MCF 10A (cell line): ENCODE measurements at regions of chr16 and their contacts with region 1.

Region 1: DNA sequence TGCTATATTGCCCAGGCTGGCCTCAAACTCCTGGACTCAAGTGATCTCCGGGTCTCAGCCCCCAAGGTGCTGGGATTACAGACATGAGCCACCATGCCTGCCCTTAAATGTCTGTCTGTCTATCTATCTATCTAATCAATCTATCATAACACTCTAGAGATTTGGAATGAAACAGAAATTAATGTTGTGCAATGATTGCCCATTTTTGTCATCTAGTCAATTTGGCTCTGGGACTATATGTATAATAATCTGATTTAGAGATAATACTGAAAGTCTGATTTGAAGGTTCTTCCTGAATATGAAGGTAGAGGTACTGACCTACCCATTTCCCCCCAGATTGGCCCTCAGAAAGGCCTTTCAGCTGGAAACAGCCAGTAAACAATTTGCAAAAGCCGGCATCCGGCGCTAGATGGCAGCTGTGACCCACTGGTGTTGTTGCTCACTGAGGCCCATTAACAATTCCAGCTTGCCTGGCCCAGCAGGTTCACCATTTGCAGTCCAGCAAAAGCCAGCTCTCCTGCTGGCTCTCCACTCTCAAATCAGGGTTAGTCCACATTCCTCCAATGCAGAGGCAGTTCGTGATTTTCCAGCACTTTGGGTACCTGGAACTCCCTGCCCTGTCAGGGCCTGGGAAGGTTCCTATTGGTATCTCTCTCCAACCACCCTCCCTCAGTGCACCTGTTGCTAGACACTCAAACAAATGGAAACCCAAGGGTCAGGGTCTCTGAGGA is 22.9 kb upstream of the C16orf87 start:
- DNase-seq: peak; percentile 79
- H3K4me3 Mint-ChIP-seq: no peak overlapping the region
- H3K27ac Mint-ChIP-seq: no peak overlapping the region
- H3K4me1 Mint-ChIP-seq: no peaks in the 10 kb centered on the region
- H3K27me3 Mint-ChIP-seq: no peaks in the 10 kb centered on the region
- CTCF ChIP-seq: peak; percentile 95

Region 2: GRCh38 chr16:46607529-46607928 is 246.3 kb before region 1 on chr16:
- CTCF ChIA-PET with region 1: no interaction called
- POLR2A ChIA-PET with region 1: no interaction called
- intact Hi-C with region 1: no loop called
- DNase-seq: peak; percentile 49
- H3K4me3 Mint-ChIP-seq: no peak overlapping the region
- H3K27ac Mint-ChIP-seq: no peak overlapping the region
- H3K4me1 Mint-ChIP-seq: no peaks in the 10 kb centered on the region
- H3K27me3 Mint-ChIP-seq: no peaks in the 10 kb centered on the region
- CTCF ChIP-seq: peak; percentile 26

Region 3: DNA sequence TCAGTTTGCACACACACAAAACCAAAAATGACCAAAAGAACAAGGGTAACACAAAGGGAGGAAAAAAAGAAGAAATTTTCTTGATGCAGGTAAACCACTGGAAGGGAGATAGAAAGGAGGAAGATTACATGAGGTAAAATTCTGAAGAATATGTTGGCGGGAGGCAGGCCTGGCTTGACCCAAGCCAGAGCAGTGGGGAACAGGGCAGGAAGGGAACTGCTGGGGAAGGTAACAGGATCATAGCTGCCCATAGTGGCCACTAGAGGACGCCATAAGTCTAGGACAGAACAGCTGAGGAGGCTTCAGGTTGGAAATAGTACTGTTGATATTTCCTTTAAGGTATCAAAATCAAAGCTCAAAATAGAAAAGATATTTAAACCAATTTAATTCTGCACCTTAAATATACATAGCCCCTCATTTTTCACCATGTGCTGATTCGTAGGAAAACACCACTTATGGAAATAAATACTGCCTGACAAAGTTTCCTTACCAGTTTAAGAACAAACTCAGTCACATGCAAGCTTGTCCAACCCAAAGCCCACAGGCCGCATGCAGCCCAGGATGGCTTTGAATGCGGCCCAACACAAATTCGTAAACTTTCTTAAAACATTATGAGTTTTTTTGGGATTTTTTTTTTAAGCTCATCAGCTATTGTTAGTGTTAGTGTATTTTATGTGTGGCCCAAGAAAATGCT is 180.4 kb before region 1 on chr16:
- CTCF ChIA-PET with region 1: interaction called, 10 read pairs
- POLR2A ChIA-PET with region 1: no interaction called
- intact Hi-C with region 1: no loop called
- DNase-seq: peak; percentile 69
- H3K4me3 Mint-ChIP-seq: no peak overlapping the region
- H3K27ac Mint-ChIP-seq: no peak overlapping the region
- H3K4me1 Mint-ChIP-seq: no peaks in the 10 kb centered on the region
- H3K27me3 Mint-ChIP-seq: no peaks in the 10 kb centered on the region
- CTCF ChIP-seq: peak; percentile 89

Region 4: DNA sequence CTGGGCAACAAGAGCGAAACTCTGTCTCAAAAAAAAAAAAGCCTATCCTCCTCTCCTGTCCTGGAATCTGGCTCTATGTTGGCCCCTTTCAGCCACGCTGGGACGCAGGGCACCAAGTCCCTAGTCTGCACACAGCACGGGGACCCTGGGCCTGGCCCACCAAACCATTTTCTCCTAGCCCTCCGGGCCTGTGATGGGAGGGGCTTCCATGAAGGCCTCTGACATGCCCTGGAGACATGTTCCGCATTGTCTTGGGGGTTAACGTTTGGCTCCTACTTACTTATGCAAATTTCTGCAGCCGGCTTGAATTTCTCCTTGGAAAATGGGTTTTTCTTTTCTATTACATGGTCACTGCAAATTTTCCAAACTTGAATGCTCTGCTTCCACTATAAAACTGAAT is 17.7 kb after region 1 on chr16:
- CTCF ChIA-PET with region 1: interaction called, 50 read pairs
- POLR2A ChIA-PET with region 1: no interaction called
- intact Hi-C with region 1: no loop called
- DNase-seq: no peak
- H3K4me3 Mint-ChIP-seq: no peak overlapping the region
- H3K27ac Mint-ChIP-seq: no peak overlapping the region
- H3K4me1 Mint-ChIP-seq: no peaks in the 10 kb centered on the region
- H3K27me3 Mint-ChIP-seq: no peaks in the 10 kb centered on the region
- CTCF ChIP-seq: no peak

Region 5: GRCh38 chr16:46896314-46896968 is 42.6 kb after region 1 on chr16:
- CTCF ChIA-PET with region 1: interaction called, 287 read pairs
- POLR2A ChIA-PET with region 1: no interaction called
- intact Hi-C with region 1: no loop called
- DNase-seq: no peak
- H3K4me3 Mint-ChIP-seq: no peak overlapping the region
- H3K27ac Mint-ChIP-seq: no peak overlapping the region
- H3K4me1 Mint-ChIP-seq: peaks cover 6% of the 10 kb centered on the region
- H3K27me3 Mint-ChIP-seq: no peaks in the 10 kb centered on the region
- CTCF ChIP-seq: no peak

Region 6: GRCh38 chr16:46918861-46919792 is 65.2 kb after region 1 on chr16:
- CTCF ChIA-PET with region 1: interaction called, 287 read pairs
- POLR2A ChIA-PET with region 1: no interaction called
- intact Hi-C with region 1: no loop called
- DNase-seq: no peak
- H3K4me3 Mint-ChIP-seq: no peak overlapping the region
- H3K27ac Mint-ChIP-seq: peak overlapping the region; percentile 8
- H3K4me1 Mint-ChIP-seq: no peaks in the 10 kb centered on the region
- H3K27me3 Mint-ChIP-seq: no peaks in the 10 kb centered on the region
- CTCF ChIP-seq: no peak

Region 7: DNA sequence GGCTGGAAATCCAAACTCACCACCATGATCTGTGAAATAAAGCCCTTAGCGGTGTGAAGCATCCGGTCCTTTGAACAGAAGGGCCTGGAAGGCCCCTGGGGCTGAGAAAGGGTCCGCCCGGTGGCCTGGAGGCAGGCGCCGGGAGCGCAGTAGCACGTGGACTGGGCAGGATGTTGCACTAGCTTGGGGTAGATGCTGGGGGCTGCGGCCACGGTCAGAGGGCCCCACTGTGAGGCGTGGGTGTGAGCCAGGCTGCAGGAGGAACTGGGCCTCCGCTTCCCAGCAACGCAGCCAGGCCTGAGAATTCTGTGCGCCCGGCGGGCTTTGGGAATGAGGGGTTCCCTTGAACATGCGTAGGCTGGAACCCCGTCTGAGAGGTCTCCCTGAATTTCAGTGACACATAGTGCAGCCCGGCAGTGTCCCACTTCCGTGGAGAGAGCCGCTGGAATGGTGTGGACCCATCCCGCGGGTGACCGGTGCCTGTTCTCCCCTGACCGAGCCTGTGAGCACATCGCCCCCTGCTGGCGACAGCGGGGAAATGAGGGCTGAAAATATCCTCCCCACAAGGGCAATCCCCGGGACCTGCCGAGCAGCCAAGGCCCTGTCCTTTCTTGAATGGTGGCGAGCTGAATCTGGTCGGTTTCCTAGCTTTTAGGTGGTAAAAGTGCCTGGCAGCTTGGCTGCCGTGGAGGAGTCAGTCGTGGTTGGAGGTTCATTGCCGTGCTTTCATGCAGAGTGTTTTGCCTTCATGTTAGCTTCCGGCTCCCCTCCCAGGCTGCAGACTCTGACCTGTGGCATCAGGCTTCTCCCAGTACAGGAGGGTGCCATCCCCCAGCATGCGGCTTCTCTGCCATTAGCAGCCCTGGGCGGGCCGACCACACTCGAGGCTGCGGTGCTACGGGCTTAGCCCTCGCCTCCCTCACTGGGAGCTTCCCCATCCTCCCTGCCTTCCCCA is 75.8 kb after region 1 on chr16:
- CTCF ChIA-PET with region 1: interaction called, 87 read pairs
- POLR2A ChIA-PET with region 1: interaction called, 4 read pairs
- intact Hi-C with region 1: loop called (anchors 1 kb)
- DNase-seq: peak; percentile 57
- H3K4me3 Mint-ChIP-seq: no peak overlapping the region
- H3K27ac Mint-ChIP-seq: no peak overlapping the region
- H3K4me1 Mint-ChIP-seq: no peaks in the 10 kb centered on the region
- H3K27me3 Mint-ChIP-seq: no peaks in the 10 kb centered on the region
- CTCF ChIP-seq: peak; percentile 87

Region 8: GRCh38 chr16:47018223-47018891 is 164.5 kb after region 1 on chr16:
- CTCF ChIA-PET with region 1: no interaction called
- POLR2A ChIA-PET with region 1: no interaction called
- intact Hi-C with region 1: loop called (anchors 5 kb)
- DNase-seq: peak; percentile 61
- H3K4me3 Mint-ChIP-seq: no peak overlapping the region
- H3K27ac Mint-ChIP-seq: no peak overlapping the region
- H3K4me1 Mint-ChIP-seq: no peaks in the 10 kb centered on the region
- H3K27me3 Mint-ChIP-seq: no peaks in the 10 kb centered on the region
- CTCF ChIP-seq: peak; percentile 37